ENCODE measurements at regions of chr2 and their contacts with region 1.

Region 1: GRCh38 chr2:42959234-42960001 is 167.0 kb upstream of the HAAO start:
- DNase-seq: peak in 1 of 2 donors; percentile 62
- ATAC-seq: peak; percentile 41 to 80 (median 64)
- H3K4me3 ChIP-seq: no peak overlapping the region
- H3K27ac ChIP-seq: peak overlapping the region; percentile 69 to 93 (median 79)
- H3K4me1 ChIP-seq: peaks cover 33 to 84% (median 70%) of the 10 kb centered on the region in 9 donors
- H3K27me3 ChIP-seq: no peaks in the 10 kb centered on the region
- CTCF ChIP-seq: no peak

Region 2: DNA sequence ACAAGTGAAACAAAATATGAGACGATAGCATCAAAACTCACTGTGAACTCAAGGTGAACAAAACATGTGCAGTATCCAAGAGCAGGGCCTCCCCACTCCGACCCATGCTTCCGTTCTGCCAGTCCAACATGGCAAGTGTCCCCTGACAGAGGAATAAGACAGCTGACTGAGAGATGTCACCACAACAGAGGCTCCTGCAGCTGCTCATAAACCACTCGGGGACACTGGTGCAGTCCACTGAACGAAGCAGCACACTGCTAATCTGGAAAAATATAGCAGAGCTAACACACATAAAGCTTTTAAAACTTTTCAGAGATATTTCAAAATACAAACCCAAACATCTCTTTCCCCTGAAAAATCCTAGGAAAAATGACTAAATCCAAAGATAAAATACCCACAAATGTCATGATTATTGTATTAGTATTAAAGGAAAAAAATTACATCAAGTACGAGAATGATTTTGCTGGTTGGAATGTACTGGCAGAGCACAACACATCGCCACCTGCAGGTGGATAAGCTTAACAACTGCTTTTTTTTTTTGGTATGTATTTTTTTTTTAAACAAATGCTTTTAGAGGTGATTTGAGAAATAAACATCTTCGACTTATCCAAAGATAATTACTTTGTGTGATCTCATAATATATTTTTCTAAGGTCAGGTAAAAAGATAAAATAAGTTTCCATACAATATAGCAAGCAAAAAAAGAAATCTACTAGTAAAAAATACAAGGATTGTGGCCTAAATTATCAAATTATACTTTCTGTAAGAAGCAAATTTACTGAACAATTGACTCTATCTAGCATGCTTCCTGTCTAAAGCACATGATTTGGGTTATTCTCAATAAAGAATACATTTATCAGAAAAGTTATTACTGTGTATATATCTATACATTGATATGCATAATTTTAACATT is 617.8 kb after region 1 on chr2:
- intact Hi-C with region 1: loop called in 1 of 10 experiments (anchors 10 kb)
- DNase-seq: no peak
- ATAC-seq: peak in 5 of 8 donors; percentile 25 to 69 (median 51)
- H3K4me3 ChIP-seq: no peak overlapping the region
- H3K27ac ChIP-seq: peak overlapping the region in 5 of 10 donors; percentile 14 to 45 (median 37)
- H3K4me1 ChIP-seq: peaks cover 0 to 5% (median 0%) of the 10 kb centered on the region in 9 donors
- H3K27me3 ChIP-seq: no peaks in the 10 kb centered on the region
- CTCF ChIP-seq: peak; percentile 54 to 90 (median 78)

Measured in heart right ventricle (tissue), 16 donors.